ENCODE measurements at regions of chr12 and their contacts with region 1.

Region 1: DNA sequence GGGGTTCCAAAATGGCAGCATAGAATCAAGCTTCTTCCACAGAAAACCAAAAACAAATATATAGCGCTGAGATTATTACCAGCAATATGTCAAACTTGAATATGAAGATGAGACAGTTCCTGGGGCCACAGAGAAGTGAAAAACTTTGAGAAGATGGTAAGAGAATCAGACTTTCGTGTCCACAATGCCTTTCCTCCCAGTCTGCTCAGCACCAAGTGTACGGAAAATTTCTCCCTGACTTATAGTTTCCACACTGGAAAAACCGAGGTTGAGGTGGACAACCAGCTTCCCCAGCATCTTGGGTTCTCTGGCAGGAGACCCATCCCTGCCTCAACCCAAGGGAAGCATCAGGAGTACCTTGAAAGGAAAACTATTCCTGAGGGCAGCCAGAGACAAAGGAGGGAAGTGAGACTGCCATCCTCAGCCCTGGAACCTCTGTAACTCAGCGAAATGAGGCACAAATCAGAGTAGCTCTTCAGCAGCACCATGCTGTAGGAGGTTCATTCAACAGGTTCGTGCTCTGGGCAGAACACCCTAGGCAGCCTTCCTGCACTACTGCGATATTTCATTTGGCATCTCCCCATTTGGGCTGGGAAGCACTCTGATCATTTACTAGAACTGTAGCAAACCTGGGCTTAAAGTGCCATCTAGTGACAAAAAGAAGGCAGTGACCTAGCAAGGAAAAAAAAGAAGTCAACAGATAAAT is 52.4 kb upstream of the CAPRIN2 start:
- DNase-seq: peak in 1 of 3 donors; percentile 67
- ATAC-seq: peak; percentile 96 to 99 (median 98)
- H3K4me3 ChIP-seq: no peak overlapping the region
- H3K27ac ChIP-seq: no peak overlapping the region
- H3K4me1 ChIP-seq: no peaks in the 10 kb centered on the region
- H3K27me3 ChIP-seq: no peaks in the 10 kb centered on the region
- CTCF ChIP-seq: peak; percentile 64 to 87 (median 80)
- POLR2A ChIP-seq: no peak

Region 2: GRCh38 chr12:29519585-29520182 is 1287.5 kb before region 1 on chr12:
- intact Hi-C with region 1: loop called in 1 of 2 experiments (anchors 10 kb)
- DNase-seq: no peak
- ATAC-seq: peak in 3 of 4 donors; percentile 41 to 68 (median 48)
- H3K4me3 ChIP-seq: no peak overlapping the region
- H3K27ac ChIP-seq: no peak overlapping the region
- H3K4me1 ChIP-seq: peaks cover 0 to 7% (median 0%) of the 10 kb centered on the region in 4 donors
- H3K27me3 ChIP-seq: no peaks in the 10 kb centered on the region
- CTCF ChIP-seq: peak; percentile 56 to 69 (median 66)
- POLR2A ChIP-seq: no peak